ENCODE measurements at regions of chr20 and their contacts with region 1.

Region 1: DNA sequence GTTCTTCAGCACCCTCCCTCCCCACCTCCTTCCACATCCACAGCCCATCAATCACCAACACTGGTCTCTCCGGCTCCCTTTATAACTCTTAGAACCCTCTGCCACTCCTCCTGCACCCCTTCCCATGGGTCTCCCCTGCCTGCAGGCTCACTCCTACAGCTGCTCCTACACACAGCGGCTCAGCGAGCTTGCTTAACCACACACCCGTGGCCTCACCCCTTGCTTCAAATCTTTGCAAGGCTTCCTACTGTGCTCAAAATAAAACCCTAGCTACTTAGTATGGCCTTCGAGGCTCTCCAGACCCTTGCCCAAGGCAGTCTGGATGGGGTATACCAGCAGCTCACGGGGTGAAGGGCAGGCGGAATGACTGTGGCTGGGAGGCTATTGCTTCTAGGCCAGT is 63.7 kb downstream of the JPH2 start:
- DNase-seq: no peak
- H3K4me3 ChIP-seq: no peak overlapping the region
- CTCF ChIP-seq: no peak

Region 2: DNA sequence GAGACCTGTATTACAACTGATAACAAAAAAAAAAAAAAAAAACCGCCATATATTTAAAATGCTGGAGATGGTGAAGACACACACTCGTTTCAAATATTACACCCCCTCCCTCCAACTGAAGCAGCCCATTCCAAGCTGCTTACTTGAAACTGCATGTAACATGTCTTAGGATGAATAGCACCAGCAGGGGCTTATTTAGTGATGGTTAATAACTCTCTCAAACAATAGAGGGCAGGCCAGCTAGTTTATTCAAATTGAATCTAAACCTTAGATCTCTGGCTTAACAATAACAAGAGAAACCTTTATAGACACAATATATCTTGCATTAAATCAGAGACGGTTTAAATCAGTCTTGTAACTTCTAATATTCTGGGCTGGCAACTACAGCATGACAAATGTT is 73.0 kb after region 1 on chr20:
- in situ Hi-C with region 1: loop called (anchors 5 kb)
- DNase-seq: no peak
- H3K4me3 ChIP-seq: no peak overlapping the region
- CTCF ChIP-seq: peak; percentile 41

Measured in astrocyte of the cerebellum (primary cell).